WTC11 (cell line): ENCODE measurements at regions of chr7 and their contacts with region 1.

Region 1: GRCh38 chr7:100444311-100445278 is 8.3 kb upstream of the PPP1R35 start:
- DNase-seq: no peak
- ATAC-seq: peak; percentile 31
- H3K4me3 Mint-ChIP-seq: no peak overlapping the region
- H3K27ac Mint-ChIP-seq: peak overlapping the region; percentile 63
- H3K4me1 Mint-ChIP-seq: peaks cover 5% of the 10 kb centered on the region
- H3K27me3 Mint-ChIP-seq: no peaks in the 10 kb centered on the region
- CTCF ChIP-seq: no peak

Region 2: DNA sequence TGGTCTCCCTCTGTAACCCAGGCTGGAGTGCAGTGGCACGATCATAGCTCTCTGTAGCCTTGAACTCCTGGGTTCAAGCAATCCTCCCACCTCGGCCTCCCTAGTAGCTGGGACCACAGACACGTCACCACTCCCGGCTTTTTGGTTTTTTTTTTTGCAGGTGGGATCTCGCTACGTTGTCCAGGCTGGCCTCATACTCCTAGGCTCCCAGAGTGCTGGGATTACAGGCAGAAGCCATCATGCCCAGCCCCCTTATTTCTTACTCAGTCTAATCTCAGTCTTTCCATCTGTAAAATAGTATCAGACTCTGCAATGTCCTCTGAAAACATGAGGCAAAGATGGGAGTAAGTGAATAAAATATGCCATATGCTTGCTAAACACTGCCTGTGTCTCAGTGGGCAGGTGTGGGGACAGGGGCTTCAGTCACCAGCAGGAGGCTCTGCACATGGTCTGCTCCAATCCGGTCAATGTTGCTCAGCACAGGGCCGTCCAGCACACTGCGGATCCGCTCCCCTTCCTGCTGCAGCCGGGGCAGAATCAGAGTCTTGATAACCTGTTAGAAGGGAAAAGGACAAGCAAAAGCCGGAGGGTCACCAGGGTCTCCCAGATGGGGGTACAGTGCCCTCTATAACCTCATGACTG is 335.0 kb before region 1 on chr7:
- CTCF ChIA-PET with region 1: no interaction called
- POLR2A ChIA-PET with region 1: no interaction called
- DNase-seq: no peak
- ATAC-seq: peak; percentile 61
- H3K4me3 Mint-ChIP-seq: no peak overlapping the region
- H3K27ac Mint-ChIP-seq: no peak overlapping the region
- H3K4me1 Mint-ChIP-seq: no peaks in the 10 kb centered on the region
- H3K27me3 Mint-ChIP-seq: no peaks in the 10 kb centered on the region
- CTCF ChIP-seq: no peak

Region 3: DNA sequence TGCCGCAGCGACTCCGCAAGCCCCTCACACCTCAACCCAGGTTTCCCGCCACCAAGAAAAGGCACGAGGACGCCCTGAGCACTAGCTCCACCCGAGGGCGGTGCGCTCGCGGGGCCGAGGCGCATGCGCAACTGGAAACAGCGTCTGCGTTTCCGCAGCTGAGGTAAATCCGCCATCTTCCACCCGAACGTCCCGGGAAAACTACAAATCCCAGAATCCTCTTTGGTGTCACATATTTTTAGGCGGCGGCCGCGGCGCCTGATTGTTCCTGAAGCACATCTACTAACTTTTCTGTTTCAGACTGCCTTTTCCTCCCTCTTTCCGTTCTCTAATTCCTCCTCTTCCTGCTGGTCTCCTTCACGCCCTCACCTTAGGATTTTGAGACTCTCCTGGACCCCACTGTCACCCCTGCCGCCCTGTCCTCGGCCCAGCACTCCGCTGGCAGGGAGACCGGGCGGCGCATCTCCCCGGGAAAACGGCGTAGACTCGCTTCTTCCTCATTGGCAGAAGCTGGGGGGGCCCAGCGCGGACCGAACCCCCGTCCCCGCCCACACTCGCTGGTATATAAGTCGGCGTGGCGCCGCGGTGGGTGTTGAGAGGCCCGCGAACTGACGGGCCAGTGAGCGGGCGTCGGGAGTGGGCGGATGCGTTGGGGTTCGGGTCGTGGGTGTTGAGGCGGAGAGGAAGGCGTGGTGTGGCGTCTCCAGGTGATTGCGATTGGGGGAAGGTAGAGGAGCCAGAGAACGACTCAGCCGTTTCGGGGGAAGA is 16.2 kb before region 1 on chr7 and contains the start of gene ZCWPW1:
- CTCF ChIA-PET with region 1: interaction called, 13 read pairs
- POLR2A ChIA-PET with region 1: interaction called, 25 read pairs
- DNase-seq: peak; percentile 95
- ATAC-seq: peak; percentile 47
- H3K4me3 Mint-ChIP-seq: peak within 1 kb of the TSS; percentile 97
- H3K27ac Mint-ChIP-seq: peak within 1 kb of the TSS; percentile 100
- H3K4me1 Mint-ChIP-seq: peaks cover 19% of the 10 kb centered on the region
- H3K27me3 Mint-ChIP-seq: peaks cover 30% of the 10 kb centered on the region
- CTCF ChIP-seq: no peak
- total RNA-seq, gene ZCWPW1: 1.4 to 1.5 TPM (median 1.4 TPM) in 3 replicates

Region 4: GRCh38 chr7:100483101-100483721 is 38.6 kb after region 1 on chr7:
- CTCF ChIA-PET with region 1: no interaction called
- POLR2A ChIA-PET with region 1: no interaction called
- DNase-seq: peak; percentile 83
- ATAC-seq: peak; percentile 58
- H3K4me3 Mint-ChIP-seq: peak overlapping the region; percentile 86
- H3K27ac Mint-ChIP-seq: no peak overlapping the region
- H3K4me1 Mint-ChIP-seq: peaks cover 30% of the 10 kb centered on the region
- H3K27me3 Mint-ChIP-seq: no peaks in the 10 kb centered on the region
- CTCF ChIP-seq: peak; percentile 89